GM12878 (cell line): ENCODE measurements at regions of chr4 and their contacts with region 1.

Region 1: GRCh38 chr4:143025081-143025704 is 159.5 kb upstream of the USP38 start:
- DNase-seq: no peak
- ATAC-seq: peak; percentile 70
- H3K4me3 ChIP-seq: no peak overlapping the region
- H3K27ac ChIP-seq: no peak overlapping the region
- H3K4me1 ChIP-seq: peaks cover 4% of the 10 kb centered on the region
- H3K27me3 ChIP-seq: no peaks in the 10 kb centered on the region
- CTCF ChIP-seq: peak; percentile 32 to 53 (median 51); a peak in 5 of 6 replicates
- EP300 ChIP-seq: no peak
- POLR2A ChIP-seq: no peak
- RAD21 ChIP-seq: peak; percentile 80

Region 2: GRCh38 chr4:142883040-142883832 is 142.0 kb before region 1 on chr4:
- CTCF ChIA-PET with region 1: interaction called, 24 read pairs
- POLR2A ChIA-PET with region 1: no interaction called
- RAD21 ChIA-PET with region 1: interaction called, 6 read pairs
- SMC1A ChIA-PET with region 1: interaction called, 14 read pairs
- in situ Hi-C with region 1: no loop called
- intact Hi-C with region 1: loop called (anchors 2 kb)
- DNase-seq: no peak
- ATAC-seq: peak; percentile 57; the same call in 2 of the 3 replicates
- H3K4me3 ChIP-seq: no peak overlapping the region
- H3K27ac ChIP-seq: no peak overlapping the region
- H3K4me1 ChIP-seq: no peaks in the 10 kb centered on the region
- H3K27me3 ChIP-seq: no peaks in the 10 kb centered on the region
- CTCF ChIP-seq: peak in 2 of 3 experiments; percentile 20 to 30; a peak in 2 of 6 replicates
- EP300 ChIP-seq: no peak
- POLR2A ChIP-seq: no peak
- RAD21 ChIP-seq: peak; percentile 25; the same call in 1 of the 2 replicates

Region 3: DNA sequence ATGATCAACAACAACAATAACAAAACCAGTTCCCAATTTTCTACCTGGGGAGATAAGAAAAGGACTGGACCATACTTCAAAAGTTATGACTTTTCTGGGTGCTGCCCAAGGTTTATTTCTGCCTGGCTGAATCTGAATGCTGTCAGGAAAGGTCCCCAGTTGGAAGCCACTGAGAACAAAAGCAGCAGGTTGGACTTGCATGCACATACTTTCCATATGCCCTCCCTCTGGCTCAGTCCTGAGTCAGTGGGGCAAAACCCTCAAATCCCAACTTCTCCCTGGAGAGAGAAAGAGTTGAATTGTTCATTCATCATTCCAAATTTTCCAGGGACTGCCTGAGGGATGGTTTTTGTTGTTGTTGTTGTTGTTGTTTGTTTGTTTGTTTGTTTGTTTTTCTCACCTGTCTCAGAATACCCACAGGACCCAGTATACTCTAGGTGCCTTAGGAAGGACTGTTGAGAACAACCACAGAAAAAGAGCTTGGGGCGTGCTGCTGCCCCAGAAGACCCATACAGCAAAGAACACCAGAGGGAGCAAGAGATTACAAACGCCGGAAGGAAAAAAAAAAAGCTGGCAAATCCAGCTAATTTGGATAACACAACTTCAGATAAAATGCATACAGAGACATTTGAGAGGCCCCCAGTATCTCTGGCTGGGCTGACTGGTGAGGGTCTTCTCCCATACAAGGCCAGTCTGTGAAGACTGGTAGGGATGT is 40.2 kb before region 1 on chr4:
- CTCF ChIA-PET with region 1: interaction called, 7 read pairs
- POLR2A ChIA-PET with region 1: interaction called, 3 read pairs
- RAD21 ChIA-PET with region 1: interaction called, 12 read pairs
- SMC1A ChIA-PET with region 1: interaction called, 5 read pairs
- in situ Hi-C with region 1: no loop called
- intact Hi-C with region 1: no loop called
- DNase-seq: no peak
- ATAC-seq: 0 out of 3 replicates have a peak, but pooled peaks have one; percentile 44
- H3K4me3 ChIP-seq: no peak overlapping the region
- H3K27ac ChIP-seq: no peak overlapping the region
- H3K4me1 ChIP-seq: no peaks in the 10 kb centered on the region
- H3K27me3 ChIP-seq: no peaks in the 10 kb centered on the region
- CTCF ChIP-seq: peak in 2 of 3 experiments; percentile 13 to 29; a peak in 2 of 6 replicates
- EP300 ChIP-seq: no peak
- POLR2A ChIP-seq: no peak
- RAD21 ChIP-seq: peak; percentile 47